Common myeloid progenitor, CD34-positive (primary cell): ENCODE measurements at regions of chr12 and their contacts with region 1.

Region 1: DNA sequence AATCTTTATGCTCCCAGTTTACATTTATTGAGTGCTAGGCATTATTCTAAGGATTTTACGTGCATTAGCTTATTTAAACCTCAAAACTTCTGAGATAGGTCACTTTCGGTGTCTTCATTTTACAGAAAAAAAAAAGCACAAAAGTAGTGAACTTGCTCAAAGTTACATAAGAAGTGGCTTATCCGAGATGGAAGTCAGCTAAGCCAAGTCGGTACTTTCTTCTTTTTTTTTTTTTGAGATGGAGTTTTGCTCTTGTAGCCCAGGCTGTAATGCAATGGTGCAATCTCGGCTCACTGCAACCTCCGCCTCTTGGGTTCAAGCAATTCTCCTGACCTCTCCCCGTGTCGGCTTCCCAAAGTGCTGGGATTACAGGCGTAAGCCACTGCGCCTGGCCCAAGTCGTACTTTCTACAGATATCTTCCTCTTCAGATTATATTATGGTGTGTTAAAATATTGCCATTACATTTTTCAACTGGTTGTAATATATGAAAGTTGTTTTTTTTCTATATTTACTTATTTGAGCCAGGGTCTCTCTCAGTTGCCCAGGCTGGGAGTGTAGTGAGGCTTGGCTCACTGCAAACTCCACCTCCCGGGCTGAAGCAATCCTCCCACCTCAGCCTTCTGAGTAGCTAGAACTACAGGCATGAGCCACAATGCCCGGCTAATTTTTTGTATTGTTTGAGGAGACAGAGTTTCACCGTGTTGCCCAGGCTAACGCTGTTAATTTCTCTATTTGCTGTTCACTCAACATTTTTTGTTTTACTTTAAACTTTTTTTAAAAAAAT is 8.9 kb downstream of the DPPA3 start:
- DNase-seq: no peak
- H3K4me3 ChIP-seq: no peak overlapping the region
- H3K27ac ChIP-seq: no peak overlapping the region
- H3K4me1 ChIP-seq: peaks cover 4 to 19% (median 11%) of the 10 kb centered on the region in 4 experiments
- H3K27me3 ChIP-seq: no peaks in the 10 kb centered on the region

Region 2: GRCh38 chr12:7806863-7807487 is 86.8 kb after region 1 on chr12:
- CTCF ChIA-PET with region 1: interaction called, 16 read pairs
- POLR2A ChIA-PET with region 1: no interaction called
- DNase-seq: peak; percentile 74 to 81 (median 75)
- H3K4me3 ChIP-seq: no peak overlapping the region
- H3K27ac ChIP-seq: no peak overlapping the region
- H3K4me1 ChIP-seq: peaks cover 4 to 12% (median 6%) of the 10 kb centered on the region in 4 experiments
- H3K27me3 ChIP-seq: no peaks in the 10 kb centered on the region